H1 (cell line): ENCODE measurements at regions of chr11 and their contacts with region 1.

Region 1: DNA sequence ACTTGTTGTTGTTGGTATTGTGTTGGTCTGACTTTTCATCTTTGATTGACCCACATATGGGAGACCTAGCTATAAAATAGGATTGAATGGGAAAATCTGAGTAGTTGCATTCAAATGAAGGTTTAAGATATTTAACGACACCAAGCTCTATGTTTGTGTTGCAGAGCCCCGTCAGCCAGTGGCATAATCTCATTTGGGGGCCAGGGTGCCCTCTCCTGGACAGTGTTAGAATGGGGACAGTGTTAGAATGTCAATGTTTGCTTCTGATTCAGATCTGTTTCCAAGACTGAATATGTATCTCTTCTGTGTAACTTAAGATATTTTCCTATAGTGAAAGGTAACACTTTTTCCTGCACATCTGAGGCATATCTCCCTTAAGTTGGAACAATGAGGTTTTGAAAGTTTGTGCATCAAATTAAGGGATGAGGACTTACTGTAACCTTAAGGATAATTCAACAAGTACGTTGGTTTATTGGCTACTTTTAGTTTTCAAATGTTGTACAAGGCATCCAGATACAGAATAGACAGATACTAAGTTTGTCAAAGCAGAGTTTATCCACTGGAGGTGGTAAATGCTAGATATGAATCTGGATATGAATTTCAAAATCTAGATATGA is 5.3 kb upstream of the OR52M1 start:
- DNase-seq: peak in 1 of 2 experiments; percentile 82
- H3K4me3 ChIP-seq: no peak overlapping the region
- H3K27ac ChIP-seq: no peak overlapping the region
- H3K4me1 ChIP-seq: no peaks in the 10 kb centered on the region
- H3K27me3 ChIP-seq: no peaks in the 10 kb centered on the region
- CTCF ChIP-seq: peak; percentile 73 to 79 (median 79)
- EP300 ChIP-seq: no peak
- POLR2A ChIP-seq: no peak
- RAD21 ChIP-seq: peak; percentile 79 to 84

Region 2: GRCh38 chr11:4187055-4187988 is 352.4 kb before region 1 on chr11:
- CTCF ChIA-PET with region 1: interaction called, 172 read pairs
- POLR2A ChIA-PET with region 1: interaction called, 3 read pairs
- DNase-seq: peak; percentile 60 to 98
- H3K4me3 ChIP-seq: peak overlapping the region; percentile 42 to 76 (median 67)
- H3K27ac ChIP-seq: no peak overlapping the region; the same call in 1 of the 2 replicates
- H3K4me1 ChIP-seq: peaks cover 0 to 3% (median 1%) of the 10 kb centered on the region in 4 experiments; a peak in 3 of 7 replicates
- H3K27me3 ChIP-seq: peaks cover 0 to 8% (median 3%) of the 10 kb centered on the region in 4 experiments; a peak in 4 of 7 replicates
- CTCF ChIP-seq: peak; percentile 85 to 98 (median 86)
- EP300 ChIP-seq: no peak
- POLR2A ChIP-seq: 0 out of 3 replicates have a peak, but pooled peaks of 1 of the 2 experiments have one; percentile 34
- RAD21 ChIP-seq: peak; percentile 96 to 99

Region 3: DNA sequence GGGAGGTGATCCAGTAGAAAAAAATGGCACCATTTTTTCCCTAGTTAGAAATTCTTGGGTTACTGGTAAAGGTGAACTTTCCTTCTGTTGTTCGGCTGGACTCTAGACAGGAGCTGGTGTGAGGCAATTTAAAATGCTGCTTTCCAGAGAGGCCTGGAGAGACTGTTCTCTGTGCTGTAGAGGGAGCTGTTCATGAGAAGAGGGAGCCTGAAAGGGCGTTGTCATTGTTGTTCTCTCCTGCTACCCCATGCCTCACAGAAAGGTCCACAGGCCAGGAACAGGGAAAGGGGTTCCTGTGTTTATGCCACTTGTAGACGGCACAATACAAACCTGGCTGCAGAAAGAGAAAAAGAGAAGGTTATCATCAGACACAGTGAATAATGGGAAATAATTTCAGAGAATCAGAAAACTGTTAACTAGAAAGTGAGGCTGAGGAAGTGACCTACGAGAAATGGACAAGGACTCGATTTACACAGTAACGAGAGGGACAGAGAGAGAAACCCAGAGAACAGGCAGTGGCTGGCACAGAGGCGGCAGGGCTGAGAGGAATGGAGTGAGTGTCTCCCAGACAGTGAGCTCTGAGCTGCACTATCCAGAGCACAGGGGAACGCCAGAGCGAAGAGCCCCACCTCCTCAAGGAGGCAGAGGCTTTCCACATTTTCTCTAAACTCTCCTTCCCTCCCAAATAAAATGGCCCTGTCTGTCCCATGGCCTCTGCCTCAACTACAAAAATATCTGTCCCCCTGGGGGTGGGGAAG is 335.9 kb before region 1 on chr11:
- CTCF ChIA-PET with region 1: interaction called, 36 read pairs
- POLR2A ChIA-PET with region 1: no interaction called
- DNase-seq: no peak
- H3K4me3 ChIP-seq: no peak overlapping the region
- H3K27ac ChIP-seq: no peak overlapping the region
- H3K4me1 ChIP-seq: no peaks in the 10 kb centered on the region
- H3K27me3 ChIP-seq: no peaks in the 10 kb centered on the region
- CTCF ChIP-seq: peak; percentile 16 to 67 (median 51)
- EP300 ChIP-seq: no peak
- POLR2A ChIP-seq: no peak
- RAD21 ChIP-seq: peak; percentile 51 to 62

Region 4: DNA sequence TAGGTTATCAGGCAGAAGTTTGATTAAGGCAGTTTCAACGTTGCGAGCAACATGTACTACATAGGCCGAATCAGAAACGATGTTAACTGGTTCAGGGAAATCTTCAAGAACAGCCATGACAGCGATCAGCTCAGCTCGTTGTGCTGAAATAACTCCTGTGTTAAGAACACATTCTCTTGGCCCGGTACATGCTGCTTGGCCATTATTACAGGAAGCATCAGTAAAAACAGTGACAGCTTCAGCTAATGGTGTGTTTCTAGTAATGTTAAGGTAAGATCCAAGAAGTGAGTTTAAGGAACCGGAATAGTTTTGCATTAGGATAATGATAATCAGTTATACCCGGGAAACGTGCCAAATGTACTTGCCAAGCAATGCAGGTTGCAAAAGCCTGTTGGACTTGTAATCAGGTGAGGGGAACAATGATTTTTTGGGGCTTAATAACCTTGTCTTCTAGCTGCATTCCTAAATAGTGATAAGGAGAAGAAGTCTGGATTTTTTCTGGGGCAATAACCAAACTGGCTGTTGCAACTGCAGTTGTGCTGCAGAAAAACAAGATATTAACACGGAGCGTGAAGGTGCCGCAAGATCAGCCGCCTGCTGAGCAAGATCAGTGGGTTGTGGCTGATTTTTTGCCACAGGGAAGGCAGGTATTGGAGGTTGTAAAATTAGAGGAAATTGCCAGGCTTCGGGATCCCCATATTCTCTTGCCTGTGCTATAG is 43.0 kb before region 1 on chr11:
- CTCF ChIA-PET with region 1: interaction called, 29 read pairs
- POLR2A ChIA-PET with region 1: no interaction called
- DNase-seq: no peak
- H3K4me3 ChIP-seq: no peak overlapping the region
- H3K27ac ChIP-seq: no peak overlapping the region
- H3K4me1 ChIP-seq: no peaks in the 10 kb centered on the region
- H3K27me3 ChIP-seq: no peaks in the 10 kb centered on the region
- CTCF ChIP-seq: no peak
- EP300 ChIP-seq: no peak
- POLR2A ChIP-seq: no peak
- RAD21 ChIP-seq: no peak

Region 5: GRCh38 chr11:4511282-4512245 is 28.1 kb before region 1 on chr11:
- CTCF ChIA-PET with region 1: interaction called, 10 read pairs
- POLR2A ChIA-PET with region 1: no interaction called
- DNase-seq: no peak
- H3K4me3 ChIP-seq: no peak overlapping the region
- H3K27ac ChIP-seq: no peak overlapping the region
- H3K4me1 ChIP-seq: no peaks in the 10 kb centered on the region
- H3K27me3 ChIP-seq: peaks cover 0 to 2% (median 0%) of the 10 kb centered on the region in 4 experiments; a peak in 1 of 7 replicates
- CTCF ChIP-seq: no peak
- EP300 ChIP-seq: no peak
- POLR2A ChIP-seq: no peak
- RAD21 ChIP-seq: no peak

Region 6: GRCh38 chr11:4551346-4551979 is 11.8 kb after region 1 on chr11:
- CTCF ChIA-PET with region 1: interaction called, 72 read pairs
- POLR2A ChIA-PET with region 1: no interaction called
- DNase-seq: no peak
- H3K4me3 ChIP-seq: no peak overlapping the region
- H3K27ac ChIP-seq: no peak overlapping the region
- H3K4me1 ChIP-seq: no peaks in the 10 kb centered on the region
- H3K27me3 ChIP-seq: no peaks in the 10 kb centered on the region
- CTCF ChIP-seq: peak in 2 of 3 experiments; percentile 34 to 51; a peak in 3 of 4 replicates
- EP300 ChIP-seq: no peak
- POLR2A ChIP-seq: no peak
- RAD21 ChIP-seq: peak; percentile 33 to 44

Region 7: GRCh38 chr11:4577761-4578160 is 38.0 kb after region 1 on chr11:
- CTCF ChIA-PET with region 1: interaction called, 21 read pairs
- POLR2A ChIA-PET with region 1: no interaction called
- DNase-seq: no peak
- H3K4me3 ChIP-seq: no peak overlapping the region
- H3K27ac ChIP-seq: no peak overlapping the region
- H3K4me1 ChIP-seq: no peaks in the 10 kb centered on the region; a peak in 1 of 7 replicates
- H3K27me3 ChIP-seq: no peaks in the 10 kb centered on the region
- CTCF ChIP-seq: no peak
- EP300 ChIP-seq: no peak
- POLR2A ChIP-seq: no peak
- RAD21 ChIP-seq: no peak